ENCODE measurements at regions of chr7 and their contacts with region 1.

Region 1: DNA sequence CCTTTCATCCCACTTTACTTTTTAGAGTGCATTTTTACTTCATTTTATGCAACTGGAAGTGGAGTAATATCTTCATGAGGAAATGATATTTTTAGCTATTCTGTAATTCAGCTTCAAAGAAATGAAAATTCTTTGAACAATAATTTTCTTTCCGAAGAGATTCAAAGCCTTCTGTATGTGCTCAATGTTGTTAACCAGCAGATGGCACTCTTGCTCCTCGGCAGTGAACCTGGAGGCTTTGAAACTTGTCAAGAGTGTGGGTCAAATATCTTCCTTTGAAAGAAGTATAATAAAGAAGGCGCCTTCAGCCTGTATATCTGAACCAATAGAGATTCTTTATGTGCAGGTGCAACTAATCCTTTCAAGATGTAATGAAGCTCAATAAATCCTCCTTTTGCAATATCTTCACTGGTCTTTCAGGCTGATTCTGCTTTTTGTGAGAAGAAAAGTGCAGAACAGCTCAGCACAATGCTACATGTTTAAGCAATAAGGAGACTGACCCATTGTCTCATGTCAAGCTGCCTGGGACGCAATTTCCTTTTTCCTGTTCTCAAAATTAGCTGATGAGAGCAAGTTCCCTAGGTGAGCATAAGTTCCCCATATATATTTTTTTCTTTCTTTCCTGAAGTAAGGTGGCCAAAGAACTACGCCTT is 258.4 kb downstream of the SEMA3A start:
- DNase-seq: peak; percentile 71
- H3K4me3 Mint-ChIP-seq: no peak overlapping the region
- H3K27ac Mint-ChIP-seq: no peak overlapping the region
- H3K4me1 Mint-ChIP-seq: no peaks in the 10 kb centered on the region
- H3K27me3 Mint-ChIP-seq: peaks cover 3% of the 10 kb centered on the region

Region 2: DNA sequence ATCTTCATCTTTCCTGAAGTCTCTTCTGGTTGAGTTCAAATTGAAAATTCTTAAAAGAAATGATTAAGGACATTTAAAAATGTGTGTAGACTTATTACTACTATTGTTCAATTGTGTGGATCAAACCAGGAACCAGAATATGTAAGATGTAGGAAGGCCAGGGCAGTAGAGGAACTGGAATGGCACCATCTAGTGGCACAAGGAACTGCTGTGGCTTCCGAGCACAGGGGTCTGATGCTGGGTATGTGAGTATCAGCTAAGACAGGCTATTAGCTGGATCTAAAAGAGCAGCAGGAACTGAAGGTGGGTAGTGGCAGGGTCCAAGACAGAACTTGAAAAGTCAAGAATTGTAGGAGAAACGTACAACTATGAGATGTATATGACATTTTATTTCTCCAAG is 11.1 kb after region 1 on chr7:
- CTCF ChIA-PET with region 1: interaction called, 15 read pairs
- DNase-seq: no peak
- H3K4me3 Mint-ChIP-seq: no peak overlapping the region
- H3K27ac Mint-ChIP-seq: no peak overlapping the region
- H3K4me1 Mint-ChIP-seq: no peaks in the 10 kb centered on the region
- H3K27me3 Mint-ChIP-seq: peaks cover 4% of the 10 kb centered on the region

Region 3: DNA sequence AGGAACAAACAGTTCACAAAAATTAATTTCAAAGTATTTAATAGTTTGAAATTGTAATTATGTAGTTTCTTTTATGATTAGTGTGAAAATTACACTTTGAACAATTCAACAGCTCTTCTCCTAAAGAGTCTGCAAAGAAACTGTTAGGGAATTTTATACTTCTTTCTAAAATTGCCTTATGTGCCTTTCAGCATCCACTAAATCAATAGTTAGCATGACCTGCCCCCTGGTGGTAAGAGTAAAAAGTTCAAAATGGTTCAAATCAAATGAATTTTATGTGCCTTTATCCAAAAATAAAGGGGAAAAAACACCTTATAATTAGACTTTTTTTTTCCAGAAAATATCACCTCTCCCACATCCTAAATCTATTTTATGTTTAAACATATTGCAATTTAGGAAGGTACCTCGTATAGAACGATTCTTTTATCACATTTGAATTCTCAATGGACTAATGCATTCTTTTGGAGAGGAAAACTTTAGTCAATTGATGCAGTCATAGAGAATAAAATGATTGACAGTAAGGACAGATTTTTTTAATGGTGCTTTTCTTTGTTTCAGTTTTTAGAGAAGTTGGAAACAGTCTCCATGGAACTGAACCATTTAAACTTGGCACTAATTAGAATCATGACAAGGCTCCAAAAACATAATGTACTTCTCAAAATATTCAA is 1087.0 kb after region 1 on chr7:
- CTCF ChIA-PET with region 1: interaction called, 27 read pairs
- DNase-seq: peak; percentile 27
- H3K4me3 Mint-ChIP-seq: no peak overlapping the region
- H3K27ac Mint-ChIP-seq: no peak overlapping the region
- H3K4me1 Mint-ChIP-seq: no peaks in the 10 kb centered on the region
- H3K27me3 Mint-ChIP-seq: no peaks in the 10 kb centered on the region